Panc1 (cell line): ENCODE measurements at regions of chr9 and their contacts with region 1.

Region 1: DNA sequence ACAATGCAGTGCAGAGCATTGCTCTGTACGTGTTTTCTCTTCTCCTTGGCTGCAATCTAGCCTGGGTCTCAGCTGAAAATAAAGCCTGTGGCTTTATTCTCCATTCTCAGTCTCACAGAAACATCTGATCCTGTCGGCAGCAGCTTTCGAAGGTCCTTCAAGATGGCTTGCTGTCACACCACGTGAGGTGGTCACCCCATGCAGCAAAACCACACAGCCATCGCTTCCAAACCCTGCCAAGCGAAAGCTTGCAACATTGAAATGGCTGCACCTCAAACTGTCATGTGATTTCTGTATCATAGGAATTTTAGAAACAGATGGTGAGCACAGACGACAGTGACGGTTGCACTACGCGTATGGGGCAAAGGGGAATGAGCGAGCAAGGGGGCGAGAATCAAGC is 98.5 kb upstream of the SMARCA2 start:
- DNase-seq: no peak
- ATAC-seq: no peak
- H3K4me3 ChIP-seq: peak overlapping the region in 1 of 2 experiments; percentile 33; a peak in 2 of 4 replicates
- H3K27ac ChIP-seq: no peak overlapping the region
- H3K4me1 ChIP-seq: no peaks in the 10 kb centered on the region
- H3K27me3 ChIP-seq: no peaks in the 10 kb centered on the region
- CTCF ChIP-seq: no peak

Region 2: DNA sequence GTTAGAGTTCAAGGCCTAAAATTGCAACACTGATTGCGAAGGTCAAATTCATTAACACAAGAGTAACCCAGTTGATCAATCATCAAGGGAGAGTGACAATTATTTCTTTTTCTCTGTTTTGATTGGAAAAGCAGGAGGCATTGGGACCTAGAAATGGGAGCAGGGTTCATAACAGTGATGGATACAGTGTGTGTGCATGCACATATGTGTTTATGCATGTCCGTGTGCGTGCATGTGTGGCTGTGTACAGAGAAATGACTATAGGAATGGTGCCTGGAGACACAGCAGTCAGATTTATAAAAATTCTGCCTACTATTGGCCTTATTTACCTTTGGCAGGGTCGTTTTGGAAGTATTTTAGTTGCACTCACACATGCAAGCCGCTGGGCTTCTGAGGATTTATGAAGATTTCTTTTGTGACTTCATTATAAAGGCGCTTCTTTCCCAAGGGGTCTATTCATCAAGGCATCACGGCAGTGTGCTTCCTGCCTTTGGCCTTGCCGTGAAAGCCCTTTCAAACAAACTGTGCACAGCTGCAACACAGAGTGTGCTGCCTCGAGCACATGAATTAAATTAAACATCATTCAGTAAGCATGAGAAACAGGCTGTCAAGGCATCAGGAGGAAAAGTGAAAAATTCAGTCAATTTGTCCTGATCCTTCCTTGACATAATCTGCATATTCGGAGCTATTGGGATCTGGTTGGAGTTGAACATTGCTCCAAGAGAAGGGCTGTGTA is 1050.1 kb after region 1 on chr9:
- CTCF ChIA-PET with region 1: no interaction called
- POLR2A ChIA-PET with region 1: interaction called, 16 read pairs
- in situ Hi-C with region 1: no loop called
- intact Hi-C with region 1: no loop called
- DNase-seq: no peak
- ATAC-seq: no peak
- H3K4me3 ChIP-seq: no peak overlapping the region
- H3K27ac ChIP-seq: no peak overlapping the region
- H3K4me1 ChIP-seq: no peaks in the 10 kb centered on the region
- H3K27me3 ChIP-seq: no peaks in the 10 kb centered on the region
- CTCF ChIP-seq: no peak